ENCODE measurements at regions of chr7 and their contacts with region 1.

Region 1: DNA sequence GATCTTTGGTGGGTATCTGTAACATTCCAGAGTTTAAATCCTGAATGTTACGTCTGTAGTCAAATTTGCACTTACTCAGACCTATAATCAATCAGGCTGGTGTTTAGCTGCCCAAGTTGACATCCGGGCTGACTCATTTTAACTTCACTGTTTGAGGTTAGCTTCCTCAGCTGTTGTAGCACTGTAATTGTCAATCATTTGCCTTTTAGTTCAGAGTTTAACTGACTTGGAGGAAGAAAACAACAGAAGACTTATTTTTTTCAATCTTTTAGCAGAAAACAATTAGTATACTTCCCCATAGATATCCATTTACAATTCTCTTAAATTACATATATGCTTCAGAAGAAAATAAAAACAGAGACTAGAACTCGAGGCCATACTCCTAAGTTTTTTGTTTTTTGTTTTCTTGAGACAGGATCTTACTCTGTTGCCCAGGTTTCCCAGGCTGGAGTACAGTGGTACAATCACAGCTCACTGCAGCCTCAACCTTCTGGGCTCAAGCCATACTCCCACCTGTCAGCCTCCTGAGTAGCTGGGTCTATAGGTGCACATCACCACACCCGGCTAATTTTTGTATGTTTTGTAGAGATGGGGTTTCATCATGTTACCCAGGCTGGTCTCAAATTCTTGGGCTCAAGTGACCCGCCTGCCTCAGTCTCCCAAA is 38.5 kb upstream of the LRRC17 start:
- DNase-seq: peak; percentile 96
- H3K4me3 ChIP-seq: no peak overlapping the region
- H3K27ac ChIP-seq: peak overlapping the region; percentile 98
- H3K4me1 ChIP-seq: peaks cover 59% of the 10 kb centered on the region
- H3K27me3 ChIP-seq: no peaks in the 10 kb centered on the region
- CTCF ChIP-seq: no peak
- POLR2A ChIP-seq: peak; percentile 23

Region 2: DNA sequence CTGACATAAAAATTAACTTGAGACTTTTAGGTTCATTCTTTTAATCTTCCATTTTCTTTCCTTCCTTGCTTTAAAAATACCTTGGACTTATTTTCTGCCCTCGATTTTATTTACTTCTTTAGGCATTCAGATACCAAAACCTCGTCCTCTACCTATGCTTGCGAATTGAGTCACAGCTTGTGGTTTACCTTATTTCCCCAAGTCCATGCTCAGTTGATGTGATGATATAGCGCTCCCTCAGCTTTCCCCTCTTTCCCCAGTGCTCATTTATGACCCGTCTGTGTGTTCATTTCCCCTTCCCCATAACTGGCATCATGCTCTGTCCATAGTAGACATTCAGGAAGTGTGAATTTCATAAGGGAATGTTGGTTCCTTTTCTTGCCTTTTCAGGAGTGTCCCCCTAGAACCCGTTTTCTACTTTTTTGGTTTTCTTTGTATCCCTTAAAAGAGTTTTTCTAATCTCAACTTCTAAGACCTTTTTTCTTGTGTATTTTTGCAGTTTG is 497.3 kb before region 1 on chr7:
- CTCF ChIA-PET with region 1: no interaction called
- POLR2A ChIA-PET with region 1: no interaction called
- dilution Hi-C with region 1: no loop called
- intact Hi-C with region 1: no loop called
- DNase-seq: no peak
- H3K4me3 ChIP-seq: no peak overlapping the region
- H3K27ac ChIP-seq: no peak overlapping the region
- H3K4me1 ChIP-seq: peaks cover 5% of the 10 kb centered on the region
- H3K27me3 ChIP-seq: no peaks in the 10 kb centered on the region
- CTCF ChIP-seq: no peak
- POLR2A ChIP-seq: no peak

Region 3: GRCh38 chr7:102834999-102835398 is 39.3 kb before region 1 on chr7:
- CTCF ChIA-PET with region 1: interaction called, 5 read pairs
- POLR2A ChIA-PET with region 1: interaction called, 3 read pairs
- dilution Hi-C with region 1: no loop called
- intact Hi-C with region 1: loop called (anchors 2 kb)
- DNase-seq: peak; percentile 73
- H3K4me3 ChIP-seq: no peak overlapping the region
- H3K27ac ChIP-seq: peak overlapping the region; percentile 70
- H3K4me1 ChIP-seq: peaks cover 27% of the 10 kb centered on the region
- H3K27me3 ChIP-seq: no peaks in the 10 kb centered on the region
- CTCF ChIP-seq: no peak
- POLR2A ChIP-seq: no peak

Region 4: GRCh38 chr7:102891693-102892261 is 17.5 kb after region 1 on chr7:
- CTCF ChIA-PET with region 1: interaction called, 18 read pairs
- POLR2A ChIA-PET with region 1: interaction called, 3 read pairs
- dilution Hi-C with region 1: no loop called
- intact Hi-C with region 1: loop called (anchors 1 kb)
- DNase-seq: peak; percentile 94
- H3K4me3 ChIP-seq: no peak overlapping the region
- H3K27ac ChIP-seq: peak overlapping the region; percentile 89
- H3K4me1 ChIP-seq: peaks cover 51% of the 10 kb centered on the region
- H3K27me3 ChIP-seq: no peaks in the 10 kb centered on the region
- CTCF ChIP-seq: no peak
- POLR2A ChIP-seq: no peak

Region 5: DNA sequence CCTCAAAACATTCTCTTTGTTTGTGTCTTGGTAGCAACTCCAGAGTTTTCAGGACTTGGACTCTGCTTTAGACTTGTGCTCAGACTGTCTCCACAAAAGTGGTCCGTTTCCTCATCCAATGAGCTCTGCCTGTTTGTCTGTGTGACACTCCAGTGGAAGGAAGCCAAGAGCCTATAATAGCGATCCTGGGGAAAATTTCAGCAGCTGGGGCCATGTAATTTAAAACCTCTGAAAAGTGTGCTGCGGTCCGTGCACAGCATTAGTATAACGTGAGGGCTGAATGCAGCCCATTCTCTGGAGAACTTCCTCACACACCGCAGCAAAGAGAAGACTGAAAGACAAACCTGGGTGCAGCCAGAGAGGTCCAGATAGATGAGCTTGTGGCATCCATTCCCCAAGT is 38.4 kb after region 1 on chr7 and contains the start of gene LRRC17:
- CTCF ChIA-PET with region 1: interaction called, 6 read pairs
- POLR2A ChIA-PET with region 1: no interaction called
- dilution Hi-C with region 1: no loop called
- intact Hi-C with region 1: loop called (anchors 1 kb)
- DNase-seq: peak; percentile 85
- H3K4me3 ChIP-seq: peak within 1 kb of the TSS; percentile 25 to 77 (median 75)
- H3K27ac ChIP-seq: peak within 1 kb of the TSS; percentile 68
- H3K4me1 ChIP-seq: peaks cover 20% of the 10 kb centered on the region
- H3K27me3 ChIP-seq: no peaks in the 10 kb centered on the region
- CTCF ChIP-seq: no peak
- POLR2A ChIP-seq: no peak
- total RNA-seq, gene LRRC17: 22.7 and 31.9 TPM in 2 replicates

Region 6: DNA sequence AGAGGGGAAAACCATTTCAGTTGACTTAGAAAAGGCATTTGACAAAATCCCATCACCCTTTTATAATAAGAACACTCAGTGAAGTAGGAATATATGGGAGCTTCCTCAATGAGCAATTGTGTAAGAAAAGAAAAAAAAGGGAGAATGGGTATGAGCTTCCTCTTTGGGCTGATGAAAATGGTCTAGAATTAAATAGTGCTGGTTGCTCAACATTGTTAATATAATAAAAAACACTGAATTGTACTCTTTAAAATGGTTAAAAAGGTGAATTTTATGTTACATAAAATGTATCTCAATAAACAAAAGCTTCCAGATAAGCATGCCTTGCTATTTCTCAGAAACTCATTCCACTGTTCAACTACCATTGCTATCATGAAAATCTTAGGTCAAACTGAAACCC is 79.1 kb after region 1 on chr7:
- CTCF ChIA-PET with region 1: no interaction called
- POLR2A ChIA-PET with region 1: no interaction called
- dilution Hi-C with region 1: no loop called
- intact Hi-C with region 1: no loop called
- DNase-seq: no peak
- H3K4me3 ChIP-seq: no peak overlapping the region
- H3K27ac ChIP-seq: no peak overlapping the region
- H3K4me1 ChIP-seq: no peaks in the 10 kb centered on the region
- H3K27me3 ChIP-seq: no peaks in the 10 kb centered on the region
- CTCF ChIP-seq: no peak
- POLR2A ChIP-seq: no peak

Region 7: DNA sequence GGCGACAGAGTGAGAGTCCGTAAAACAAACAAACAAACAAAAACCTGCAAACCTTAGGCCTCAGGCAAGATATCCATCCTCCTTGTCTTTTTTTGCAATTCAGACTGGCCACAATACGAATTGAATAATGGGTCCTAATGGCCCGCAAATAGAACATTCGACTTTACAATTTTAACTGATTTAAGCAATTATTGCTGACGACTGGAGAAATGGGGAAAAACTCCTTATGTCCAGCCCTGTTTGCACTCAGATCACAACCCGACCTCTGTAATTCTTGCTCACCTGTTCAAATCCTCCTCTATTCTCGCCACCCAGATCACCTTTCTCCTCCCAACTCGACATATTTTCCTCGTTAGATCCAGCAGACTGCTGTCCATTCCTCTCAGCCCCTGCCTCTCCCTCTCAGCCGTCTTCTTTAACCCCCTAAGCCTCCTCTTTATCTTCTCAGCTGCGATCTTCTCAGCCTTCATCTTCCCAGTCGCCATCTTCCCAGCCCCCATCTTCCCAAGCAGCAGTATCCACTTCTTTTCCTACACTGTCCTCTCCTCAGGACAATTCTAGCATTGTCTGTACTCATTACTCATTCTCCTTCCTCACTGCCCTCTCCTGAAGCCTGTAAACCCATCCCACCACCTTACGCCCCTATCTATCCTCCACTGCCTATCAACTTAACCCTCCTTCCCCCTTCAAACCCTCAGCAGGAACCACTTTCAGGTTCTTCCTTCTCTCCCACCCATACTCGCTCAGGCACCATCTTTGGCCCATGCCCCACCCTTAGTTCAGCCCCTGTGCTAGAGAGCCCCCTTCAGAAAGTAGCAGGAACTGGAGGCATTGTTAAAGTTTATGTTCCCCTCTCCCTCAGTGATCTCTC is 100.3 kb after region 1 on chr7:
- CTCF ChIA-PET with region 1: no interaction called
- POLR2A ChIA-PET with region 1: interaction called, 4 read pairs
- dilution Hi-C with region 1: no loop called
- intact Hi-C with region 1: loop called (anchors 1 kb)
- DNase-seq: no peak
- H3K4me3 ChIP-seq: no peak overlapping the region
- H3K27ac ChIP-seq: peak overlapping the region; percentile 88
- H3K4me1 ChIP-seq: peaks cover 19% of the 10 kb centered on the region
- H3K27me3 ChIP-seq: no peaks in the 10 kb centered on the region
- CTCF ChIP-seq: no peak
- POLR2A ChIP-seq: no peak

Region 8: DNA sequence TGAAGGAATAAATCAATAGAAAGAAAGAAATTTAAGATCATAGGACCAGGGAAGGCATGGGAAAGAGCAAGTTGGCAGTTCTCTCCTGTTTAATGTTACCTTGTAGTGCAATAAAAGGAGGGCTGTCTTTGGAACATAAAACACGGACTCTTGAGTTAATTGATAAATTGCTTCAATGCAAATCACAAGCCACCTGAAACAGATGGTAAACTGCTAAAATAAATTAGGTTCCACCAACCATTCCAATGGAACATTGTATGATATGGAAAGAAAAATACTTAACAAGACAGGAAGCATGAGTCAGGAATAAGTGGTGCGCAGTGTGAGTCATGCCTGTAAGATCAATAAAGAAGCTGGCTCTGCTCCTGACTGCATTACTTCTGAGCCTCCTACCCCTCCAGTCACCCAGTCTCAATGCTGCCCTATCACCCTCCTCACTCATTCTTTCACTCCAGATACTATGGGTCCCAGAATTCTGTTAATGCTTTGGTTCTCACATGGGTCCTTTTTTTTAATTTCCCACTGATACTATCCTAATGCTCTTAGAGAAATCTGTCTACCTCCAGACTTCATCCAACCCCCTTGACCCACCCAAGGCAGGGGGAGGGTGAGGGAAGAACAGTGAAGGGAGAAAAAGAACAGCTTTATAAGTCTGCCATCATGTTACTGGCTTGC is 117.4 kb after region 1 on chr7:
- CTCF ChIA-PET with region 1: interaction called, 14 read pairs
- POLR2A ChIA-PET with region 1: interaction called, 3 read pairs
- dilution Hi-C with region 1: no loop called
- intact Hi-C with region 1: loop called (anchors 1 kb)
- DNase-seq: peak; percentile 97
- H3K4me3 ChIP-seq: no peak overlapping the region
- H3K27ac ChIP-seq: peak overlapping the region; percentile 99
- H3K4me1 ChIP-seq: peaks cover 43% of the 10 kb centered on the region
- H3K27me3 ChIP-seq: no peaks in the 10 kb centered on the region
- CTCF ChIP-seq: no peak
- POLR2A ChIP-seq: peak; percentile 83